Activated T-helper 1 cell treated with anti-CD3 and anti-CD28 coated beads, Interleukin-12 subunit alpha, Interleukin-12 subunit beta, Interleukin-2, Interleukin-4 antibody, amounts not matched to agents 30 ng/mL and 10 ng/mL and 1 ng/mL, durations not matched to agents 14 hours and 24 hours and 36 hours (primary cell): ENCODE measurements at regions of chrX and their contacts with region 1.

Region 1: DNA sequence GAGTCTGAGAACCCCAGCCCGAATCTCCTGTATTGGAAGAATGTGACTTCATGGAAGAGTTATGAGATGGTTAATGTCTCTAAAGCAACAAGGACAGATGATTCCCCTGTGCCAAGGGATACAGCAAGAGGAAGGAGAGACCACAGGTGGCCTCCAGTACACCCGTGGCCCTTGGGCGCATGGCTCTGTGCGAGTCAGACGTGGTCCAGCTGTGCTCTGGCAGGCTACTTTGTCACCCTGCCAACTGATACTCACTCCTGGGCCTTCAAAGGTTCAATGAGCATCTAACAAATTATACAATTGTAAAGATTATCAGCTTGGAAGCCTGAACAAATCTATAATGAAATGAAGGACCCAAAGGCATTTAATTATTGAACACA is 71.7 kb downstream of the NYX start:
- DNase-seq: no peak
- H3K4me3 Mint-ChIP-seq: no peak overlapping the region
- H3K27ac Mint-ChIP-seq: peak overlapping the region; percentile 67
- H3K4me1 Mint-ChIP-seq: peaks cover 55% of the 10 kb centered on the region
- H3K27me3 Mint-ChIP-seq: no peaks in the 10 kb centered on the region

Region 2: GRCh38 chrX:41759817-41760216 is 241.0 kb after region 1 on chrX:
- intact Hi-C with region 1: loop called (anchors 5 kb)
- DNase-seq: no peak
- H3K4me3 Mint-ChIP-seq: no peak overlapping the region
- H3K27ac Mint-ChIP-seq: no peak overlapping the region
- H3K4me1 Mint-ChIP-seq: peaks cover 10% of the 10 kb centered on the region
- H3K27me3 Mint-ChIP-seq: no peaks in the 10 kb centered on the region